Endothelial cell of umbilical vein (primary cell): ENCODE measurements at regions of chr2 and their contacts with region 1.

Region 1: DNA sequence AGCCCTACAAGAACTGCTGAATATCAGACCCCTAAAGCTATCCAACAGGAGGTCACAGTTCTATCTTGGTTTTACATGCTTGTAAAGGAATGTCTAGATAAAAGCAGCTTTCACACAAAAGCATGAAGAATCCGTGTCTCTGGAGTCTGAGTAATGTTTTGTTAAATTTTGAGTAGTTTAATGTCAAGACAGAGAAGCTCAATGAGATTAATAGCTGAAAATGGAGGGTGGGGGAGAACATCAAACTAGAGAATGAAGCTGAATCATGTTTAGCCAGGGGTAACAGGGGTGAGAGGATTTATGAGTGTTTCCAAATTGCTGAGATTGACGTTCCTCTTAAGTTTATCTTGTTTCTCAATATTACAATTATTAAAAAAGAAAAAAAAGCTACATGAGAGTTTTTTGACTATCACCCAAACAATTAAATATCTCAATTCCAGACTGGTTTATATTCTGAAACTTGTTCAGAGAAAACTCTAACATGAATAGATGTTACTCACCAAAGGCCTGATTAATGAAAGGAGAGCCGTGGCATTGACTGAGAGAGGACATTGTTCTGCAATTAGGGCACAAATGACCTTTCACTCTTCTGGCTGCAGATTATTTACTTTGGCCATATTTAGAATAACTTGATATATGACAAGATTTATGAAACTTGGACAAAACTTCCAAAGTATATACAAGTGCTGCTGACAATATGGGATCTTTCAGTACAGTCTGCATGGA is 266.4 kb upstream of the ETAA1 start:
- DNase-seq: peak; percentile 94
- H3K4me3 ChIP-seq: no peak overlapping the region
- H3K27ac ChIP-seq: peak overlapping the region; percentile 26
- H3K4me1 ChIP-seq: peaks cover 10% of the 10 kb centered on the region
- H3K27me3 ChIP-seq: no peaks in the 10 kb centered on the region
- CTCF ChIP-seq: no peak
- POLR2A ChIP-seq: peak; percentile 42

Region 2: DNA sequence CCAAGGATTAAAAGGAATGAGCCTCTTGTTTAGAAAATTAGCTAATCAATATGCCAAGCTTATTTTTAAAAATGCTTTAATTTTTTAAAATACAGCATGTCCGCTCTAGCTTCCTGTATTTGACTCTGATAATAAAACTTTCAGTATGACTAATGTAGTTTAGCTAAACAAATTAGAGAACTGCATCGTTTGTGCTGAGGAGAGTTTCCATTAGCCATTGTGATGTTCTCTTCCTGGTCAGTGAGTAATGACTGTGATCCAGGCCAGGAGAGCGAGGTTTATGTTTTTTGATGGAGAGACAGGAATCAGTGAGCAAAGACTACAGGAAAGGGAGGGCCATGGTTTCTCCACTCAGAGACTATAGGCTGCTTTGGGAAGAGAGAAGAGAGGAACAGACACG is 29.2 kb after region 1 on chr2:
- CTCF ChIA-PET with region 1: interaction called, 5 read pairs
- POLR2A ChIA-PET with region 1: no interaction called
- dilution Hi-C with region 1: no loop called
- intact Hi-C with region 1: loop called (anchors 1 kb)
- DNase-seq: peak; percentile 93
- H3K4me3 ChIP-seq: no peak overlapping the region
- H3K27ac ChIP-seq: peak overlapping the region; percentile 47
- H3K4me1 ChIP-seq: peaks cover 10% of the 10 kb centered on the region
- H3K27me3 ChIP-seq: no peaks in the 10 kb centered on the region
- CTCF ChIP-seq: no peak
- POLR2A ChIP-seq: no peak

Region 3: GRCh38 chr2:67883316-67884087 is 752.8 kb after region 1 on chr2:
- CTCF ChIA-PET with region 1: no interaction called
- POLR2A ChIA-PET with region 1: no interaction called
- dilution Hi-C with region 1: no loop called
- intact Hi-C with region 1: no loop called
- DNase-seq: peak; percentile 64
- H3K4me3 ChIP-seq: no peak overlapping the region
- H3K27ac ChIP-seq: no peak overlapping the region
- H3K4me1 ChIP-seq: no peaks in the 10 kb centered on the region
- H3K27me3 ChIP-seq: no peaks in the 10 kb centered on the region
- CTCF ChIP-seq: no peak
- POLR2A ChIP-seq: no peak